Transverse colon (tissue), 4 donors: ENCODE measurements at regions of chr16 and their contacts with region 1.

Region 1: GRCh38 chr16:8572919-8573724 is 17.2 kb downstream of the TMEM114 start:
- DNase-seq: no peak
- H3K4me3 ChIP-seq: no peak overlapping the region
- H3K27ac ChIP-seq: no peak overlapping the region
- H3K4me1 ChIP-seq: no peaks in the 10 kb centered on the region
- H3K27me3 ChIP-seq: peaks cover 14% of the 10 kb centered on the region
- CTCF ChIP-seq: peak; percentile 20 to 39 (median 34)
- EP300 ChIP-seq: no peak
- POLR2A ChIP-seq: no peak

Region 2: DNA sequence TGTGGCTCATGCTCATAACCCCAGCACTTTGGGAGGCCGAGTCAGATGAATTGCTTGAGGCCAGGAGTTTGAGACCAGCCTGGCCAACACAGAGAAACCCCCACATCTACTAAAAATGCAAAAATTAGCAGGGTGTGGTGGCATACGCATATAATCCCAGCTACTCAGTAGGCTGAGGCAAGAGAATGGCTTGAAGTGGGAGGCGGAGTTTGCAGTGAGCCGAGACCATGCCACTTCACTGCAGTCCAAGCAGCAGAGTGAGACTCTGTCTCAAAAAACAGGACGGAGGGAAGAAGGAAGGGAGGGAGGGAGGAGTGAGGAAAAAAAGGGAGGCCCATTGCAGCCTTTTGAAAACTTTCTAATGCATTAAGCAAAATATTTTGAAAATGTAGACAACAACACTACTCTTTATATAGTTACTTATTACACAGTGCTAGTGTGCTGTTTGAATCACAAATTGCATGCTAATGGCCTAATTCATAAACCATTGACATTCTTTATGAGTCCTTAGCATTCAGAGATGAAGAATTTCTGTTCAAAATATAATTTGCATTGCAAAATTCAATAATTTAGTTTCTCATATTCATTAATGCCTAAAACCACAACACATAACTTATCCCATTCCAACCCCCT is 42.3 kb before region 1 on chr16:
- in situ Hi-C with region 1: no loop called
- intact Hi-C with region 1: no loop called
- DNase-seq: no peak
- H3K4me3 ChIP-seq: no peak overlapping the region
- H3K27ac ChIP-seq: no peak overlapping the region
- H3K4me1 ChIP-seq: no peaks in the 10 kb centered on the region
- H3K27me3 ChIP-seq: no peaks in the 10 kb centered on the region
- CTCF ChIP-seq: no peak
- EP300 ChIP-seq: no peak
- POLR2A ChIP-seq: no peak

Region 3: DNA sequence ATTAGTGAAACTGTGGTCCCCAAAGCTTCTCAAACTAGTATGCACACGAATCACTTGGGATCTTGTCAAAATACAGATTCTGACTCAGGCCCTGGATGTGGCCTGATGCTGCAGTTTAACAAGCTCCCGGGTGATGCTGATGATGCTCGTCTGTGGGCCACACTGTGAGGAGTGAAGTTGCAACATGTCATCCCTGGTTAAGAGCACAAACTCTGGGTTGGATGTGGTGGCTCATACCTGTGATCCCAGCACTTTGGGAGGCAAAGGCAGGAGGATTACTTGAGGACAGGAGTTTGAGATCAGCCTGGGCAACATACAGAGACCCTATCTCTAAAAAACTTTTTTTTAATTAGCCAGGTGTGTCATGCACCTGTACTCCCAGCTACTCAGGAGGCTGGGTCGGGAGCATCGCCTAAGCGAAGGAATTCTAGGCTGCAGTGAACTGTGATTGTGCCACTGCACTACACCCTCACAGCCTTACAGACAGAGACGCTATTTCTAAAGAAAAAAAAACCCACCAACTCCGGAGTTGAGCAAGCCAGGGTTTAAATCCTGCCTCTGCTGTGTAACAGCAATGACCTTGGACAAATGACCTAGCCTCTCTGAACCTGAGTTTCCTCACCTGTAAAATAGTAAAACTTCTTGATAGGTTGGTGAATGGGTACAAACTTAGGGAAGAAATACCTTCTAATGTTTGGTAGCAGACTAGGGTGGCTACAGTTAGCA is 76.9 kb after region 1 on chr16:
- in situ Hi-C with region 1: loop called in 1 of 4 experiments (anchors 5 kb)
- intact Hi-C with region 1: no loop called
- DNase-seq: no peak
- H3K4me3 ChIP-seq: no peak overlapping the region
- H3K27ac ChIP-seq: no peak overlapping the region
- H3K4me1 ChIP-seq: no peaks in the 10 kb centered on the region
- H3K27me3 ChIP-seq: no peaks in the 10 kb centered on the region
- CTCF ChIP-seq: no peak
- EP300 ChIP-seq: no peak
- POLR2A ChIP-seq: no peak

Region 4: DNA sequence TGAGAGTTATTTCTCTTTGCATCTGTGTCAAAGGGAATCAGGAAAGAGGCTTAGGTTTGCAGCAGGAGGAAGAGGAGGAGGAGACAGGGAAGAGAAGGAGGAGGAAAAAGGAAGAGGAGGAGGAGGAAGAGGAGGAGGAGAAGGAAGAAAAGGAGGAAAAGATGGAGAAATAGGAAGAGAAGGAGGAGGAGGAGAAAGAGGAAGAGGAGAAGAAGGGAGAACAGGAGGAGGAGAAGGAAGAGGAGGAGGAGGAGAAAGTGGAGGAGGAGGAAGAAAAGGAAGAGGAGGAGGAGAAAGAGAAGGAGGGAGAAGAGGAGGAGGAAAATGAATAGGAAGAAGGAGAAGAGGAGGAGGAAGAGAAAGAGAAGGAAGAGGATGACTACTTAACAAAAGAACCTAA is 1150.0 kb after region 1 on chr16:
- in situ Hi-C with region 1: no loop called
- intact Hi-C with region 1: loop called (anchors 5 kb)
- DNase-seq: no peak
- H3K4me3 ChIP-seq: no peak overlapping the region
- H3K27ac ChIP-seq: no peak overlapping the region
- H3K4me1 ChIP-seq: no peaks in the 10 kb centered on the region
- H3K27me3 ChIP-seq: no peaks in the 10 kb centered on the region
- CTCF ChIP-seq: no peak
- EP300 ChIP-seq: no peak
- POLR2A ChIP-seq: no peak